IMR-90 (cell line): ENCODE measurements at regions of chr19 and their contacts with region 1.

Region 1: GRCh38 chr19:13441810-13442512 is 64.3 kb downstream of the CACNA1A start:
- DNase-seq: peak; percentile 51
- ATAC-seq: peak; percentile 67
- H3K4me3 ChIP-seq: no peak overlapping the region
- H3K27ac ChIP-seq: no peak overlapping the region
- H3K4me1 ChIP-seq: no peaks in the 10 kb centered on the region
- H3K27me3 ChIP-seq: no peaks in the 10 kb centered on the region
- CTCF ChIP-seq: no peak
- POLR2A ChIP-seq: no peak
- RAD21 ChIP-seq: no peak

Region 2: DNA sequence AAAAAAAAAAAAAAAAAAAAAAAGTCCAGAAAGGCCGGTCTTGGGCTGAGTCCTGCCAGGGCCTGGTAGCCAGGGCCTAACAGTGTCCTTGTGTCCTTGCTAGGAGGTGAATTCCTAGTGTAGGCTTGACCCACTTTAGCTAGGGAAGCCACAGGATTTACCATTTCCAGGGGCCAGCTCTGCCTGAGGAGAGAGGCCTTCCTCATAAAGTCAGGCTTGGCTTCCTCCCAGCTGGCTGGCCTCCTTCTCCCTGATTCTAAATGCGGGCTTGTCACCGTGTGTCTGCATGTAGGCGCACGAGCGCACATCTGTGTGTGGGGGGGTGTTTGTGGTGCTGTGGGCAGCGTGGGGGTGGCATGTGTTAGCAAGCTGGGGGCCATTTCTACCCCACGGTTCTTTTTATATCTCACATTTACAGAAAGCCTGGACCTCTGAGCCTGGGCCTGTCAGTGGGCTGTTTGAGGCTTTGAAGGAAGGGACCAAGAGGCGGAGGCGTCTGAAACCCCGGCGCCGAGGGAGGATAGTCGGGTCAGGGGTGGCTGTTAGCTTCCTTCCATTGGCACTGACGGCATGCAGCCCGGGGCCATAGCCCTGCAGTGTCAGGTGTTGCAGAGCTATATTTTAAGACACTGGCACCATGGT is 260.1 kb before region 1 on chr19:
- CTCF ChIA-PET with region 1: no interaction called
- POLR2A ChIA-PET with region 1: no interaction called
- dilution Hi-C with region 1: no loop called
- in situ Hi-C with region 1: no loop called
- intact Hi-C with region 1: no loop called
- DNase-seq: peak; percentile 64
- ATAC-seq: peak; percentile 78
- H3K4me3 ChIP-seq: no peak overlapping the region
- H3K27ac ChIP-seq: no peak overlapping the region
- H3K4me1 ChIP-seq: peaks cover 7% of the 10 kb centered on the region
- H3K27me3 ChIP-seq: no peaks in the 10 kb centered on the region
- CTCF ChIP-seq: no peak
- POLR2A ChIP-seq: no peak
- RAD21 ChIP-seq: no peak

Region 3: GRCh38 chr19:13463296-13463695 is 21.3 kb after region 1 on chr19:
- CTCF ChIA-PET with region 1: no interaction called
- POLR2A ChIA-PET with region 1: no interaction called
- dilution Hi-C with region 1: no loop called
- in situ Hi-C with region 1: no loop called
- intact Hi-C with region 1: loop called (anchors 1 kb)
- DNase-seq: peak; percentile 15
- ATAC-seq: peak; percentile 56
- H3K4me3 ChIP-seq: no peak overlapping the region
- H3K27ac ChIP-seq: no peak overlapping the region
- H3K4me1 ChIP-seq: no peaks in the 10 kb centered on the region
- H3K27me3 ChIP-seq: no peaks in the 10 kb centered on the region
- CTCF ChIP-seq: no peak
- POLR2A ChIP-seq: no peak
- RAD21 ChIP-seq: no peak

Region 4: DNA sequence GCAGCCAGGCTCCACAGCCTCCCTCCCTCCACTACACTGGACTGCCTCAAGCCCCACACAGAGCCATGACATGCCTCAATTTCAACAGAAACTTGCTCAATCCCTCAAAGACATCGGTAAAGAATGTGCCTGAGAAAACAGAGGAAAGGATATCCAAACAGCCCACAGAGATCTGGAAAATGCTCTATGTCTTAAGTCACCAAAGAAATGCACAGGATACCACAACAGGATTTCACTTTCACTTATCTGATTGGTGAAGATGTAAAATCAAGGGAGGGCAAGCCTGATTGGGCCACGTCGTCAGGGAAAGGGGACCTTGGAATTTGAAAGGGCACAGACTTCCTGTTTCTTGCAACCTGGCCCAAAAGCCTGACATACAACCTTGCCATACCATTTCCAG is 50.2 kb after region 1 on chr19:
- CTCF ChIA-PET with region 1: no interaction called
- POLR2A ChIA-PET with region 1: no interaction called
- dilution Hi-C with region 1: no loop called
- in situ Hi-C with region 1: no loop called
- intact Hi-C with region 1: loop called (anchors 10 kb)
- DNase-seq: peak; percentile 93
- ATAC-seq: peak; percentile 98
- H3K4me3 ChIP-seq: no peak overlapping the region
- H3K27ac ChIP-seq: peak overlapping the region; percentile 68; the same call in 1 of the 2 replicates
- H3K4me1 ChIP-seq: peaks cover 7% of the 10 kb centered on the region
- H3K27me3 ChIP-seq: no peaks in the 10 kb centered on the region
- CTCF ChIP-seq: no peak
- POLR2A ChIP-seq: no peak
- RAD21 ChIP-seq: no peak